Ovary (tissue), 10 donors: ENCODE measurements at regions of chr11 and their contacts with region 1.

Region 1: GRCh38 chr11:114059278-114059983 is at the start of gene ZBTB16:
- DNase-seq: peak; percentile 91 to 92 (median 92)
- H3K4me3 ChIP-seq: peak within 1 kb of the TSS; percentile 99
- H3K27ac ChIP-seq: peak within 1 kb of the TSS; percentile 87 to 100
- H3K4me1 ChIP-seq: peaks cover 15% of the 10 kb centered on the region
- H3K27me3 ChIP-seq: no peaks in the 10 kb centered on the region
- CTCF ChIP-seq: peak in 1 of 3 donors; percentile 16
- EP300 ChIP-seq: no peak
- POLR2A ChIP-seq: peak; percentile 44
- total RNA-seq, gene ZBTB16: 12.7 to 160 (median 94.6) TPM

Region 2: DNA sequence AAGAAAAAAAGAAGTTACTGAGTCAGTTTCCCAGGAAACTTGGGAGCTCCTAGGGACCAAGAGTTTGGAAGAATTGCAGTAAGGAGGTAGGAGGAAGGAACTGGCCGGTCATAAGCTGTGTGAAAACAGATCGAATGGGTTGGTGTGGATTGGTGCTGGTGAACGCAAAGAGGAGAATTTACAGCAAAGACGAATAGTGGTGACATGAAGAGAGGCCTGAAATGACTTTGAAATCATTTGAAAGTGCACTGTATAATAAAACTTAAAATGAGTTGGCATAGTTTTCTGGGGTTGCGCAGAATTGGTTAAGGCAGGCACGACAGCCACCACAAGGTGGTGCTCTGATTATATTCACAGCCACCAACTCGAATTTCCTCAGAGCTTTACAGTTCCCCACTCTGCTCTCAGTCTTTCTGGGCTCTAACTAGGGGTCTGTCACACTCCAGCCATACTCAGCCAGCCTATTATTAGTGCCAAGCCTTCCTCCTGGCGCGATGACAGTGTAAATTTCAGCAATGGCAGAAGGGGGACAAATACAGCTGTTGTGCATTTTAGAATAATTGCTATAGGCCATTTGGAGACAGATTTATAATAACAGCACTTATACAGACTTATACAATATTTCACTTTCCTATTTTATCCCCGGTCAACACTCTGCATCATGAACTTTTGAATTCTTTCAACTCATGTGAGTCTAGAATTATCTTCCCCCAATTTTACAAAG is 163.1 kb before region 1 on chr11:
- intact Hi-C with region 1: loop called in 1 of 4 experiments (anchors 10 kb)
- DNase-seq: peak in 4 of 5 donors; percentile 41 to 51 (median 48)
- H3K4me3 ChIP-seq: no peak overlapping the region
- H3K27ac ChIP-seq: no peak overlapping the region
- H3K4me1 ChIP-seq: peaks cover 1% of the 10 kb centered on the region
- H3K27me3 ChIP-seq: no peaks in the 10 kb centered on the region
- CTCF ChIP-seq: peak; percentile 48 to 69 (median 66)
- EP300 ChIP-seq: no peak
- POLR2A ChIP-seq: no peak

Region 3: GRCh38 chr11:114159802-114160632 is 100.6 kb after region 1 on chr11:
- intact Hi-C with region 1: loop called in 3 of 4 experiments (anchors 5 kb)
- DNase-seq: peak; percentile 99 to 100 (median 100)
- H3K4me3 ChIP-seq: peak overlapping the region; percentile 7
- H3K27ac ChIP-seq: peak overlapping the region; percentile 85 to 89
- H3K4me1 ChIP-seq: peaks cover 54% of the 10 kb centered on the region
- H3K27me3 ChIP-seq: no peaks in the 10 kb centered on the region
- CTCF ChIP-seq: peak in 1 of 3 donors; percentile 6
- EP300 ChIP-seq: peak; percentile 99
- POLR2A ChIP-seq: peak; percentile 29

Region 4: DNA sequence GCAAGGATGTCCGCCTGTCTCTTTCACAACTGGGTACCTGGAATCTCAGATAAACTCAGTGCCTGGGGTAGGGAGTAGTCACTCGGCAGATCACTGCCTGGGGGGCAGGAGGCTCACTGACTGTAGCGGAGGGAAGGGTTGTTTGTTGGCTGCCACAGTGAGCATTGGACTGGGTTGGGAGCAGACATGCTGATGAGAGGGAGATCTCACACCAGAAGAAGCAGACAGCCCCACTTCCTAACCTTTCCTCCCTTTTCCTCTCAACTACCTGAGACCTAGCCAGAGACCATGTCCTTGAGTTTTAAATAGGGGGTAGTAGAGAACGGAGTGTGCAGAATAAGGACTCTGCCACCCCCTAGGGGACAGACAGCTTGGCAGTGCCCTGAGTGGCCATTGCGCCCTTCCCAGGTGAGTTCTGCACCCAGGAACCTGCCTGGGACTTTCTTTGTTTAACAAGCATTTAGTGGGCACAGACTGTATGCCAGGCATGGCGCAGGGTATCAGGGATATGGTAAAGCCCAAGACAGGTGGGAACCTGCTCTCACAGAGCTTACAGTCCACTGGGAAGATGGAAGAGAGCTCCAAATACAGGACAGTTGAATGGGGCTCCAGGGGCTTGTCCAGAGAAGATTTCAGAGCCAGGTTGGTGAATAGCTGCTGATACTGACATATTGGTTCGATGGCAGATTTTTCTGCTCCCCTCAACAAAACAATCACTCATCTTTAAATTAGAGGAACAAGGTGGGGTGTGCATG is 121.0 kb after region 1 on chr11:
- intact Hi-C with region 1: loop called in 1 of 4 experiments (anchors 5 kb)
- DNase-seq: peak in 4 of 5 donors; percentile 59 to 68 (median 63)
- H3K4me3 ChIP-seq: peak overlapping the region; percentile 43
- H3K27ac ChIP-seq: peak overlapping the region; percentile 81 to 99
- H3K4me1 ChIP-seq: peaks cover 44% of the 10 kb centered on the region
- H3K27me3 ChIP-seq: no peaks in the 10 kb centered on the region
- CTCF ChIP-seq: peak in 1 of 3 donors; percentile 60
- EP300 ChIP-seq: no peak
- POLR2A ChIP-seq: peak; percentile 30

Region 5: DNA sequence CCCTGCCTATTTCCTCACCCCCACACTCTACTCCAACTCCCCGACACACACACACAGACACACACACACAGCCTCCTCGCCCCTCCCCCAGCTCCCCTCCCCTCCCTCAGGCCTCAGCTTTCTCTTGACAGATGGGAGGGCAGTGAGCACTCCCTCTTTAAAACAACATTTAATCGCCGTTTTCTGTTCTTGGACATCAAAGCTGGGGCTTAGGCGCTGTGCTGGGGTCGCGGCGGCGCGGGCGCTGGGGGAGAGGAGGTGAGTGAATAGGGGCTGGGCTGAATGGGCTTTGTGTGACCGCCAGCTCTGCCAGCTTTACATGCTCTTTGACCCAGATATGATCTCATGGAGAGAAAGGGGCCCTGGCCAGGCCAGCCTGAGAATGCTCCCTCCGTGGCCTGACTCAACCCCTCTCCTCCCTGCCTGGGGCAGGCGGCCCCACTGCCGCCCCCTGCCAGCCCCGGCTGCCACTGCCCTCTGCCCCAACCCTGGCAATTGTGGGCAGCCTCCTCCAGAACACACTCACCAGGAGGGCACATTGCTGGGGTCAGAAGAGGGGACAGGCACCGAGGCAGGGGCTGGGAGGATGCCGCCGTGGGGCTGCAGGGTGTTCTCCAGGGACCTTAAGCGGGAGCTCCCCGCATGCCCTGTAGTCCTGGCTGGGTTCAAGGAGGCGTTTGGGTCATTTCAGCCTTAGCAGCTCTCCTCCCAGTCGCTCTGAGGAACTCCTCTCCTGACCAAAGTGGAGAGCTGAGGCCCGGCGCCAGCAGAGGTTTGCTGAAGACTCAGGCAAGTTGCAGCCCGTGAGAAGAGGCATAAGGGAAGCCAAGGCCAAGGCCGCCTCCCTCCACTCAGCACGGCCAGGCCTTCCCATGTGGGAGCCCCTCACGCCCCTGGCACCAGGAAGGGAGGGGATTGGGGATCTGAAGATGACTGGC is 198.5 kb after region 1 on chr11:
- intact Hi-C with region 1: loop called (anchors 2 to 5 kb)
- DNase-seq: peak; percentile 74 to 88 (median 78)
- H3K4me3 ChIP-seq: peak overlapping the region; percentile 15
- H3K27ac ChIP-seq: peak overlapping the region; percentile 78 to 94
- H3K4me1 ChIP-seq: peaks cover 8% of the 10 kb centered on the region
- H3K27me3 ChIP-seq: no peaks in the 10 kb centered on the region
- CTCF ChIP-seq: peak in 1 of 3 donors; percentile 34
- EP300 ChIP-seq: no peak
- POLR2A ChIP-seq: peak; percentile 28

Region 6: GRCh38 chr11:114262681-114263512 is 203.5 kb after region 1 on chr11:
- intact Hi-C with region 1: loop called (anchors 2 to 5 kb)
- DNase-seq: peak in 1 of 5 donors; percentile 52
- H3K4me3 ChIP-seq: no peak overlapping the region
- H3K27ac ChIP-seq: no peak overlapping the region
- H3K4me1 ChIP-seq: peaks cover 5% of the 10 kb centered on the region
- H3K27me3 ChIP-seq: peaks cover 3% of the 10 kb centered on the region
- CTCF ChIP-seq: peak; percentile 17 to 67 (median 35)
- EP300 ChIP-seq: no peak
- POLR2A ChIP-seq: no peak